Ascending aorta (tissue), 2 donors: ENCODE measurements at regions of chr12 and their contacts with region 1.

Region 1: DNA sequence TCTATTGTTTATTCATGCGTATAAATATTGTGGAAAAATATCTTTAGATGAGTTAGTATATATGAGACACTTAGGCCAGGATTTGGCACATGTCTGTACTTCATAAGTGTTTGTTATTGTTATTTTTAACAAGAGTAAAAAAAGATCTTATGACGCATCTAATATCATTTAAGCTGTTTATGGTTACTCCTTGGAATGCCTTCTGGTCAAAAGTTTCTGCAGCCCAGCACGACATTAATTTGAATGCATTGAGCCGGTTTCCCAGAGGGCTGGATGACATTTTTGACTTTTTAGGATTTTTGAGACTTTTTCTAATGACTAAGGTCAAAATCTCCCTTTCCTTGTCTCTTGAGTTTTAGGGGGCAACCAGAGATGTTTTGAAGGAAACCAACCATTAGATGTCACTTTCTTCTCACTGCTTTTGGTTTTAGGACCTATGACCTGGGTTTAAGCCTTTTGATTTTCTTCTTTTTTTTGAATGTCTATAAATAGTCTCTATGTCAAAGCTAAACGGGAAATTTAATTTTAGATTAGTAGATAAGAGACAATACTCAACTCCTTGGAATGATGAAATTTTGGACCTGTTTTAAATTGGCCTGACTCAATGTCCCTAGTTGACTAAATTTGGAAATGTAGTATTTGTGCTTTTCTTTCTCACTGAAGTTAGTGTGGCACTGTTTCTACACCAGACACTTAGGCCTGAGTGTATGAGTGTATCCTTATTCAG is 215.5 kb downstream of the AEBP2 start:
- DNase-seq: no peak
- H3K4me3 ChIP-seq: no peak overlapping the region
- H3K27ac ChIP-seq: peak overlapping the region; percentile 95 to 97
- H3K4me1 ChIP-seq: peaks cover 12 to 24% of the 10 kb centered on the region in 2 donors
- H3K27me3 ChIP-seq: no peaks in the 10 kb centered on the region
- CTCF ChIP-seq: peak in 2 of 3 experiments; percentile 44 to 53

Region 2: GRCh38 chr12:19530636-19531020 is 124.2 kb before region 1 on chr12:
- intact Hi-C with region 1: no loop called
- DNase-seq: no peak
- H3K4me3 ChIP-seq: no peak overlapping the region
- H3K27ac ChIP-seq: no peak overlapping the region
- H3K4me1 ChIP-seq: peaks cover 0 to 8% of the 10 kb centered on the region in 2 donors
- H3K27me3 ChIP-seq: no peaks in the 10 kb centered on the region
- CTCF ChIP-seq: no peak

Region 3: GRCh38 chr12:19620222-19620621 is 34.6 kb before region 1 on chr12:
- intact Hi-C with region 1: no loop called
- DNase-seq: no peak
- H3K4me3 ChIP-seq: no peak overlapping the region
- H3K27ac ChIP-seq: no peak overlapping the region
- H3K4me1 ChIP-seq: peaks cover 0 to 2% of the 10 kb centered on the region in 2 donors
- H3K27me3 ChIP-seq: no peaks in the 10 kb centered on the region
- CTCF ChIP-seq: no peak

Region 4: GRCh38 chr12:19643635-19644034 is 11.2 kb before region 1 on chr12:
- intact Hi-C with region 1: no loop called
- DNase-seq: no peak
- H3K4me3 ChIP-seq: no peak overlapping the region
- H3K27ac ChIP-seq: no peak overlapping the region
- H3K4me1 ChIP-seq: peaks cover 0 to 3% of the 10 kb centered on the region in 2 donors
- H3K27me3 ChIP-seq: no peaks in the 10 kb centered on the region
- CTCF ChIP-seq: peak; percentile 22 to 74 (median 70)

Region 5: DNA sequence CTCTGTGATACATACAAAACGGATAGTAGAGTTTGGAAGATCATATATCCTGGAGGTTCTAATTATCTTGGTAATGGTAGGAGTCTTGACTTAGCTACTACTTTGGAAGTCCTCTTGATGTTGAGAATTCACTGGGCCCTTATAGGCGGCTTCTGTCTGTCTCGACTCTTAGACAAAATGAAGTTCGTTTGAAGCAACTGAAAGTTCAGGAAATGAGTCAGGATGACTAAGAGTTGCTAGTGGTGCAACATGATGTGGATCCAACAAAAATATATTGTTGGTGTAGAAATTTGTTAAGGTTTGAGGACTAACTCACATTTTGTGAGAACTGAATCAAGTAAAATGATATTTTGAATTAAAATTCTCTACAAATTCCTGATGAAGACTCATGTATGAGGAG is 57.2 kb after region 1 on chr12:
- intact Hi-C with region 1: loop called (anchors 2 kb)
- DNase-seq: peak in 1 of 2 donors; percentile 76
- H3K4me3 ChIP-seq: no peak overlapping the region
- H3K27ac ChIP-seq: peak overlapping the region; percentile 93 to 97
- H3K4me1 ChIP-seq: peaks cover 2 to 23% of the 10 kb centered on the region in 2 donors
- H3K27me3 ChIP-seq: no peaks in the 10 kb centered on the region
- CTCF ChIP-seq: no peak

Region 6: DNA sequence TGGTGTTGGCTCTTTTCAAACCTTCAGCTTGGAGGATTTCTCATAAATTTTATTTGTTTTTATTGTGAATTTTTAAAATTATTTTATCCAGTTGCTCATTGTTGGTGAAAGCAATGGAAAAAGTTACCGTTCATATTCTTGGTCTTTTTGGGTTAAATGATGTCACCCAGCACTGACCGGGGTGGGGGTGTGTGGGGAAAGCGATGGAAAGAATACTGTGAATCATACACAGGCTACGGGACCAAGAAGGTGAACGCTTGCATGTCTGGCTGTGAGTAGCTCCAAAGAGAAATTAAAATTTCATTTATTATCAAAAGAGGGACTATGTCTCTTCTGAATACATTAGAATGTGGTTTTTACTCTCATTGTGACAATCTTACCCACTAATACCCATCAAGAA is 214.6 kb after region 1 on chr12:
- intact Hi-C with region 1: loop called (anchors 10 kb)
- DNase-seq: peak in 1 of 2 donors; percentile 88
- H3K4me3 ChIP-seq: peak overlapping the region in 1 of 2 donors; percentile 14
- H3K27ac ChIP-seq: peak overlapping the region; percentile 62 to 81
- H3K4me1 ChIP-seq: peaks cover 4 to 27% of the 10 kb centered on the region in 2 donors
- H3K27me3 ChIP-seq: no peaks in the 10 kb centered on the region
- CTCF ChIP-seq: no peak

Region 7: GRCh38 chr12:20319366-20319765 is 664.6 kb after region 1 on chr12:
- intact Hi-C with region 1: no loop called
- DNase-seq: no peak
- H3K4me3 ChIP-seq: peak overlapping the region in 1 of 2 donors; percentile 44
- H3K27ac ChIP-seq: no peak overlapping the region
- H3K4me1 ChIP-seq: no peaks in the 10 kb centered on the region
- H3K27me3 ChIP-seq: no peaks in the 10 kb centered on the region
- CTCF ChIP-seq: no peak